Activated T-helper 1 cell treated with anti-CD3 and anti-CD28 coated beads, Interleukin-12 subunit alpha, Interleukin-12 subunit beta, Interleukin-2, Interleukin-4 antibody, amounts not matched to agents 30 ng/mL and 10 ng/mL and 1 ng/mL, durations not matched to agents 14 hours and 24 hours and 36 hours (primary cell): ENCODE measurements at regions of chr13 and their contacts with region 1.

Region 1: DNA sequence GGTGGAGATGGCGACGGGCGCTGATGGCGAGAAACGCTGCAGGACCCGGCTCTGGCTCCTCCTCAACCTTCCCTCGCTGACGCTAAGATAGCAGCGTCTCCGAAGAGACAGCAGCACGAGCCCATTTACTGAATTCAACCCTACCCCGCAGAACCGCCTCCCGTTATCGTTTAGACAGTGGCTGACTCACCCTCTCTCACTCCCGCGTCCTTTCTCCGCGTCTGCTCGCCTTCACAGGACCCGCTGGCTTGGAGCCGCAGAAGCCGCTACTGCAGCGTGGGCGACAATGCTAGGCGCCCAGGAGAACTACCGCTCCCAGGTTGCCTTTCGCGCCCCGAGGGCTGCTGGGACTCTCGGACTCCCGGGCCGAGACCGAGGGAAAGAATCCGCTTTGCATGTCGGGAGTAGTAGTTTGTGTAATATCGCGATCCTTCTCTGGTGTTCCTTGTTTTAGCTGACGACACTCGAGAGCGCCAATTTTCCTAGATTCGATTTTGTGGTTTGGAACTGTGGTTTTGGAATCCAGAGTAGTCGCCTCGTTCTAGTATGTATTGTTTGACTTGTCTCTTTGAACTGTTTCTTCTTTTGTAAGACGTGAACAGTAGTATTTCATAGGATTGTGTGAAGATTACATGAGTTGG is at the start of gene KBTBD6:
- DNase-seq: peak; percentile 92
- H3K4me3 Mint-ChIP-seq: peak within 1 kb of the TSS; percentile 92
- H3K27ac Mint-ChIP-seq: peak within 1 kb of the TSS; percentile 93
- H3K4me1 Mint-ChIP-seq: peaks cover 45% of the 10 kb centered on the region
- H3K27me3 Mint-ChIP-seq: peaks cover 3% of the 10 kb centered on the region
- total RNA-seq, gene KBTBD6: 6.6 and 6.8 TPM in 2 replicates

Region 2: GRCh38 chr13:40922437-40923040 is 210.1 kb before region 1 on chr13:
- intact Hi-C with region 1: loop called (anchors 1 kb)
- DNase-seq: no peak
- H3K4me3 Mint-ChIP-seq: peak overlapping the region; percentile 77
- H3K27ac Mint-ChIP-seq: peak overlapping the region; percentile 70
- H3K4me1 Mint-ChIP-seq: peaks cover 10% of the 10 kb centered on the region
- H3K27me3 Mint-ChIP-seq: peaks cover 1% of the 10 kb centered on the region

Region 3: GRCh38 chr13:41019011-41019487 is 113.6 kb before region 1 on chr13 and contains the start of gene ELF1:
- intact Hi-C with region 1: loop called (anchors 1 kb)
- DNase-seq: peak; percentile 49
- H3K4me3 Mint-ChIP-seq: peak within 1 kb of the TSS; percentile 91
- H3K27ac Mint-ChIP-seq: peak within 1 kb of the TSS; percentile 97
- H3K4me1 Mint-ChIP-seq: peaks cover 53% of the 10 kb centered on the region
- H3K27me3 Mint-ChIP-seq: no peaks in the 10 kb centered on the region
- total RNA-seq, gene ELF1: 75.3 and 76.8 TPM in 2 replicates

Region 4: GRCh38 chr13:41085961-41086585 is 46.6 kb before region 1 on chr13:
- intact Hi-C with region 1: loop called (anchors 2 kb)
- DNase-seq: no peak
- H3K4me3 Mint-ChIP-seq: no peak overlapping the region
- H3K27ac Mint-ChIP-seq: no peak overlapping the region
- H3K4me1 Mint-ChIP-seq: no peaks in the 10 kb centered on the region
- H3K27me3 Mint-ChIP-seq: no peaks in the 10 kb centered on the region

Region 5: GRCh38 chr13:41263261-41264027 is 130.8 kb after region 1 on chr13 and contains the start of gene MTRF1:
- intact Hi-C with region 1: loop called (anchors 1 kb)
- DNase-seq: peak; percentile 72
- H3K4me3 Mint-ChIP-seq: peak within 1 kb of the TSS; percentile 95
- H3K27ac Mint-ChIP-seq: peak within 1 kb of the TSS; percentile 100
- H3K4me1 Mint-ChIP-seq: peaks cover 12% of the 10 kb centered on the region
- H3K27me3 Mint-ChIP-seq: no peaks in the 10 kb centered on the region
- total RNA-seq, gene MTRF1: 17.5 and 20.2 TPM in 2 replicates

Region 6: GRCh38 chr13:41960639-41961465 is 828.2 kb after region 1 on chr13 and contains the start of gene VWA8:
- intact Hi-C with region 1: loop called (anchors 1 kb)
- DNase-seq: peak; percentile 81
- H3K4me3 Mint-ChIP-seq: peak within 1 kb of the TSS; percentile 95
- H3K27ac Mint-ChIP-seq: peak within 1 kb of the TSS; percentile 91
- H3K4me1 Mint-ChIP-seq: peaks cover 45% of the 10 kb centered on the region
- H3K27me3 Mint-ChIP-seq: peaks cover 3% of the 10 kb centered on the region
- total RNA-seq, gene VWA8: 26.4 and 26.6 TPM in 2 replicates